B cell (primary cell): ENCODE measurements at regions of chr4 and their contacts with region 1.

Region 1: GRCh38 chr4:85747882-85748491 is 273.0 kb downstream of the ARHGAP24 start:
- DNase-seq: peak; percentile 85
- ATAC-seq: peak; percentile 78
- H3K4me3 ChIP-seq: no peak overlapping the region
- H3K4me3 Mint-ChIP-seq: no peak overlapping the region
- H3K27ac ChIP-seq: no peak overlapping the region
- H3K27ac Mint-ChIP-seq: peak overlapping the region; percentile 47
- H3K4me1 ChIP-seq: peaks cover 50 to 63% of the 10 kb centered on the region in 2 donors
- H3K4me1 Mint-ChIP-seq: peaks cover 56% of the 10 kb centered on the region
- H3K27me3 ChIP-seq: no peaks in the 10 kb centered on the region
- H3K27me3 Mint-ChIP-seq: no peaks in the 10 kb centered on the region
- CTCF ChIP-seq: peak; percentile 92

Region 2: GRCh38 chr4:85147439-85148076 is 600.4 kb before region 1 on chr4:
- CTCF ChIA-PET with region 1: interaction called, 148 read pairs
- POLR2A ChIA-PET with region 1: no interaction called
- intact Hi-C with region 1: loop called (anchors 1 kb)
- DNase-seq: peak; percentile 82
- ATAC-seq: peak; percentile 83
- H3K4me3 ChIP-seq: no peak overlapping the region
- H3K4me3 Mint-ChIP-seq: no peak overlapping the region
- H3K27ac ChIP-seq: no peak overlapping the region
- H3K27ac Mint-ChIP-seq: no peak overlapping the region
- H3K4me1 ChIP-seq: peaks cover 0 to 2% of the 10 kb centered on the region in 2 donors
- H3K4me1 Mint-ChIP-seq: peaks cover 6% of the 10 kb centered on the region
- H3K27me3 ChIP-seq: no peaks in the 10 kb centered on the region
- H3K27me3 Mint-ChIP-seq: no peaks in the 10 kb centered on the region
- CTCF ChIP-seq: peak; percentile 90

Region 3: DNA sequence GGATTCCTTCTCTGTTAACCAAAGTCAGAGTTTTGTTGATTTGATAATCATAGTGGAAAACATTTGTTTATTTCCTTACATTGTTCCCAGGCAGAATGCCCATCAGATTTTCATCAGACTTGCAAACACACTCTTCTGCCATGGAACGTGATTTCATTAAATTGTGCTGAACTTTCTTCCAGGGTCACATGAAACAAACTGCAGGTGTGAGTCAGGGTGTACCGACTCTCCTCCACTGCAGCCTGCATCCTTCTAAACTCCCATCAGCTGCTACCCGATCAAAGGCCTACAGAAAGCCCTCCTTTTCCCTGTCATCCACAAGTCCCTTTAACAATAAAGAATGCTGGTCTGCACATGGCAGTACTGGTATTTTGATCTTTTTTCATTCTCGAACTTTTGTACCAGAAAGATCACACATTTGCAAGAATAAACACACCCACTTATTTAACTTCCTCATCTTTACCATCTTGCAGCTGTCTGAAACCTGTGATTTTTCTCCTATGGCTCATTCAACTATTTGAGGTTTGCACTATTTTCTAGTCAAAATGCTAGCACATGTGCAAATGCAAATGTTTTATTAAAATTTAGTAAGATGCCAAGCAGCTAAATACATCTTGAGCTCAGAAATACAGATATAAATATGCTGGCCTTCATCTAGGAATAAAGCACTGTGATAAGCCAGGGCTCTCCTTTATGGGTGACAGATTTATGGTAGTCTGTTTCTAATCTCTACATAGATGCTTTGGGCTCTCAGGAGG is 298.9 kb before region 1 on chr4:
- CTCF ChIA-PET with region 1: interaction called, 10 read pairs
- POLR2A ChIA-PET with region 1: no interaction called
- intact Hi-C with region 1: no loop called
- DNase-seq: peak; percentile 44
- ATAC-seq: peak; percentile 73
- H3K4me3 ChIP-seq: peak overlapping the region in 3 of 5 experiments; percentile 13 to 31 (median 27)
- H3K4me3 Mint-ChIP-seq: peak overlapping the region; percentile 78
- H3K27ac ChIP-seq: no peak overlapping the region
- H3K27ac Mint-ChIP-seq: peak overlapping the region; percentile 50
- H3K4me1 ChIP-seq: peaks cover 24 to 27% of the 10 kb centered on the region in 2 donors
- H3K4me1 Mint-ChIP-seq: peaks cover 27% of the 10 kb centered on the region
- H3K27me3 ChIP-seq: no peaks in the 10 kb centered on the region
- H3K27me3 Mint-ChIP-seq: no peaks in the 10 kb centered on the region
- CTCF ChIP-seq: no peak

Region 4: GRCh38 chr4:85548116-85548515 is 199.9 kb before region 1 on chr4:
- CTCF ChIA-PET with region 1: interaction called, 27 read pairs
- POLR2A ChIA-PET with region 1: no interaction called
- intact Hi-C with region 1: loop called (anchors 2 kb)
- DNase-seq: no peak
- ATAC-seq: no peak
- H3K4me3 ChIP-seq: no peak overlapping the region
- H3K4me3 Mint-ChIP-seq: no peak overlapping the region
- H3K27ac ChIP-seq: peak overlapping the region; percentile 45 to 70
- H3K27ac Mint-ChIP-seq: peak overlapping the region; percentile 62
- H3K4me1 ChIP-seq: peaks cover 14 to 17% of the 10 kb centered on the region in 2 donors
- H3K4me1 Mint-ChIP-seq: peaks cover 46% of the 10 kb centered on the region
- H3K27me3 ChIP-seq: no peaks in the 10 kb centered on the region
- H3K27me3 Mint-ChIP-seq: no peaks in the 10 kb centered on the region
- CTCF ChIP-seq: no peak

Region 5: DNA sequence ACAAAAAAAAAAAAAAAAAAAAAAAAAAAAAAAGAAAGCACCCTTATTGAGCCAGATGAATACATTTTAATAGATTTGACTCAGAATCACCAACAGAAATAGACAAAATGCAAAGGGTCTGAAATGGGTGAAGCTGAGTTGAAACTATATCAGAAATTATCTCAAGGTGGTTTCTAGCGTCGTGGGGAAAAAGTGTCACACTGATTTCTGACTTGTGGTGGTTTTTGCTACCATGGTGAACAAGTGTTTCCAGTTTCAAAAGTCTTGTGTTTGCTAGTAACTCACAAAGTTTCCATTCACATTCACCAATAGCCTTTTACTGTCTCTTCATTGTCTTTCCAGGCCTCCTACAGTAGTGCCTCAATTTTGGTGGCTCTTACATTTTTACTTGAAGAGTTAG is 137.5 kb before region 1 on chr4:
- CTCF ChIA-PET with region 1: interaction called, 6 read pairs
- POLR2A ChIA-PET with region 1: interaction called, 10 read pairs
- intact Hi-C with region 1: loop called (anchors 5 kb)
- DNase-seq: peak; percentile 57
- ATAC-seq: no peak
- H3K4me3 ChIP-seq: no peak overlapping the region
- H3K4me3 Mint-ChIP-seq: peak overlapping the region; percentile 18
- H3K27ac ChIP-seq: peak overlapping the region; percentile 81 to 91
- H3K27ac Mint-ChIP-seq: peak overlapping the region; percentile 80
- H3K4me1 ChIP-seq: peaks cover 28 to 40% of the 10 kb centered on the region in 2 donors
- H3K4me1 Mint-ChIP-seq: peaks cover 26% of the 10 kb centered on the region
- H3K27me3 ChIP-seq: no peaks in the 10 kb centered on the region
- H3K27me3 Mint-ChIP-seq: no peaks in the 10 kb centered on the region
- CTCF ChIP-seq: no peak

Region 6: DNA sequence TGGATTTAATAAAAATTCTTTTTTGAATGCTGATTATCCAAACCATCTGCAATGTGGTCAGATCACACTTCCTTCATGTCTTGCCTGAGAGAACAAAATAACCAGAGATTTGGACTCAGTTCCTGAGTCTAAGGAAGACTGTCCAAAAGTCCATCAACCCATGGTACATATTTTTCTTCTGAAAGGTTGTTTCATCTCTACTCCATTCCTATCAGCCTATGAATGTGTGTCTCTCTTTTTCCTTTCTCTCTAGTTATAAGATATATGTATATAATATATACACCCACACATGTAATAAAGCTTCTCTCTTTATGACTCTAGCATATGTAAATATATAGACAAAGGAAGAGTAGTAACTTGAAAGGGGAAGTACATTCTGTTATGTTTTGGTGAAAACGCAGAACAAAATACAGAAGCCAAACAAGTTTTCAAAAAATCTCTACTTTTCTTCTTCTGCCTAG is 46.1 kb before region 1 on chr4:
- CTCF ChIA-PET with region 1: interaction called, 6 read pairs
- POLR2A ChIA-PET with region 1: interaction called, 7 read pairs
- intact Hi-C with region 1: loop called (anchors 1 kb)
- DNase-seq: peak; percentile 82
- ATAC-seq: peak; percentile 88
- H3K4me3 ChIP-seq: peak overlapping the region in 3 of 5 experiments; percentile 17 to 53 (median 25)
- H3K4me3 Mint-ChIP-seq: peak overlapping the region; percentile 73
- H3K27ac ChIP-seq: peak overlapping the region; percentile 85 to 86
- H3K27ac Mint-ChIP-seq: peak overlapping the region; percentile 92
- H3K4me1 ChIP-seq: peaks cover 59 to 60% of the 10 kb centered on the region in 2 donors
- H3K4me1 Mint-ChIP-seq: peaks cover 64% of the 10 kb centered on the region
- H3K27me3 ChIP-seq: no peaks in the 10 kb centered on the region
- H3K27me3 Mint-ChIP-seq: no peaks in the 10 kb centered on the region
- CTCF ChIP-seq: no peak

Region 7: GRCh38 chr4:85762529-85762871 is 14.5 kb after region 1 on chr4:
- CTCF ChIA-PET with region 1: no interaction called
- POLR2A ChIA-PET with region 1: no interaction called
- intact Hi-C with region 1: no loop called
- DNase-seq: no peak
- ATAC-seq: no peak
- H3K4me3 ChIP-seq: no peak overlapping the region
- H3K4me3 Mint-ChIP-seq: no peak overlapping the region
- H3K27ac ChIP-seq: no peak overlapping the region
- H3K27ac Mint-ChIP-seq: no peak overlapping the region
- H3K4me1 ChIP-seq: peaks cover 0 to 5% of the 10 kb centered on the region in 2 donors
- H3K4me1 Mint-ChIP-seq: peaks cover 12% of the 10 kb centered on the region
- H3K27me3 ChIP-seq: no peaks in the 10 kb centered on the region
- H3K27me3 Mint-ChIP-seq: no peaks in the 10 kb centered on the region
- CTCF ChIP-seq: no peak

Region 8: GRCh38 chr4:85798012-85798770 is 50.2 kb after region 1 on chr4:
- CTCF ChIA-PET with region 1: interaction called, 12 read pairs
- POLR2A ChIA-PET with region 1: no interaction called
- intact Hi-C with region 1: no loop called
- DNase-seq: no peak
- ATAC-seq: no peak
- H3K4me3 ChIP-seq: no peak overlapping the region
- H3K4me3 Mint-ChIP-seq: no peak overlapping the region
- H3K27ac ChIP-seq: no peak overlapping the region
- H3K27ac Mint-ChIP-seq: no peak overlapping the region
- H3K4me1 ChIP-seq: peaks cover 0 to 6% of the 10 kb centered on the region in 2 donors
- H3K4me1 Mint-ChIP-seq: peaks cover 17% of the 10 kb centered on the region
- H3K27me3 ChIP-seq: no peaks in the 10 kb centered on the region
- H3K27me3 Mint-ChIP-seq: no peaks in the 10 kb centered on the region
- CTCF ChIP-seq: no peak